ENCODE measurements at regions of chr2 and their contacts with region 1.

Region 1: GRCh38 chr2:233251306-233252116 is at the start of gene ATG16L1:
- DNase-seq: peak; percentile 95
- H3K4me3 Mint-ChIP-seq: peak within 1 kb of the TSS; percentile 93
- H3K27ac Mint-ChIP-seq: peak within 1 kb of the TSS; percentile 94
- H3K4me1 Mint-ChIP-seq: peaks cover 68% of the 10 kb centered on the region
- H3K27me3 Mint-ChIP-seq: no peaks in the 10 kb centered on the region
- total RNA-seq, gene ATG16L1: 42.4 and 42.7 TPM in 2 replicates

Region 2: GRCh38 chr2:232550354-232551249 is 700.9 kb before region 1 on chr2 and contains the starts of genes EIF4E2 and TIGD1:
- intact Hi-C with region 1: loop called (anchors 1 kb)
- DNase-seq: peak; percentile 90
- H3K4me3 Mint-ChIP-seq: peak within 1 kb of the TSS; percentile 100
- H3K27ac Mint-ChIP-seq: peak within 1 kb of the TSS; percentile 100
- H3K4me1 Mint-ChIP-seq: peaks cover 76% of the 10 kb centered on the region
- H3K27me3 Mint-ChIP-seq: no peaks in the 10 kb centered on the region
- total RNA-seq, gene EIF4E2: 94.3 and 96.2 TPM in 2 replicates
- total RNA-seq, gene TIGD1: 8.4 and 8.9 TPM in 2 replicates

Region 3: GRCh38 chr2:232761301-232761907 is 490.1 kb before region 1 on chr2:
- intact Hi-C with region 1: loop called (anchors 1 kb)
- DNase-seq: peak; percentile 12
- H3K4me3 Mint-ChIP-seq: no peak overlapping the region
- H3K27ac Mint-ChIP-seq: no peak overlapping the region
- H3K4me1 Mint-ChIP-seq: peaks cover 31% of the 10 kb centered on the region
- H3K27me3 Mint-ChIP-seq: no peaks in the 10 kb centered on the region

Region 4: GRCh38 chr2:233061591-233062450 is 189.7 kb before region 1 on chr2:
- intact Hi-C with region 1: loop called (anchors 1 kb)
- DNase-seq: no peak
- H3K4me3 Mint-ChIP-seq: peak overlapping the region; percentile 97
- H3K27ac Mint-ChIP-seq: peak overlapping the region; percentile 99
- H3K4me1 Mint-ChIP-seq: peaks cover 51% of the 10 kb centered on the region
- H3K27me3 Mint-ChIP-seq: no peaks in the 10 kb centered on the region

Region 5: DNA sequence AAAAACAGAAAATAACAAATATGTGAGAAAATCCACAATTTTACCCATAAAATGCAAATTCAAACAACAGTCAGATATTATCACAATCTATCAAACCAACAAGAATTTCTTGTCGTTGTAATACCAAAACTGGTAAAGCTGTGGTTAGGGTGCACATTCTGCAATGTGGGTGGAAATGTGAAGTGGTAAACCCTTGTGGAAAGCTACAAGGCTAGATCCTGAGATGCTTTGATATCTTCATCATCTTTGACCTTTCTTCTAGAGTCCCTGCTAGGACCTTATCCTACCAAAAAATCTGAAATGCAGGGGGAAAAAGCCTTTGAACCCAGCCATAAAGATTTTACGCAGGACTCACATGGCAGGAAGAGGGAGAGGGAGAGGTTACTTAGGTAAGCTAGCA is 17.2 kb before region 1 on chr2:
- intact Hi-C with region 1: loop called (anchors 1 kb)
- DNase-seq: peak; percentile 8
- H3K4me3 Mint-ChIP-seq: peak overlapping the region; percentile 43
- H3K27ac Mint-ChIP-seq: peak overlapping the region; percentile 86
- H3K4me1 Mint-ChIP-seq: peaks cover 62% of the 10 kb centered on the region
- H3K27me3 Mint-ChIP-seq: no peaks in the 10 kb centered on the region

Region 6: DNA sequence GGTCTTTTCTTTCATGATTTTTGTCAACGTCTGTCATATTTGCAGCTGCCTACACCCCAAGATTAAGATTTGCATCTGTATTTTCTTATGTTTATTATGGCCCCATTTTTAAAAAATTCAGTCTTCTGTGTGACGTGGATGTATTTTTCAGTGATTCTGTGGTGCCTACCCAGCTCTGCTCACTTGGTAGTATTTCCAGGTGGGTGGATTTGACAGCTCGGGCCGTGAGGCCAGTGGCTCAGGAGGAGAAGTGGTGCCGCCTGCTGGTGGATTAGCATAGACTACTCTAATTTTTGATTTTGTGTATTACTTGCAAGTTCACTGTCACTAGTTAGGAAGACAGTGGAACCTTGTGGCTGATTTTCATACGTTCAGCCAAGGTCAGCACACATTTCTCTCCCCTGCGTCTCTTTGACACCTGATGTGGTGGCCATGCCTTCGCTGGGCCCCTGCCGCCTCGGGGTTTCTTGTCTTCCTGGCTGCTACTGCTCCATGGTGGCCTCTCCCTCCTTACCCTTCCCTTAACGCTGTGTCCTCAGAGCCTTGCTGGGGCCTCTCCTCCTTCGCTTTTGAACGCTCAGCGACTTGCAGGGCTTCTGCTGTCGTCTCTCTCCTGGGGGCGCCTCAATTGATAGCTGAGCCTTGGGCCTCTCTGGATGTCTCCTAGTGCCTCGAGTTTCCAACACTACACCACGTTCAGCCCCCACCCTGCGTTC is 192.1 kb after region 1 on chr2:
- intact Hi-C with region 1: loop called (anchors 5 kb)
- DNase-seq: peak; percentile 67
- H3K4me3 Mint-ChIP-seq: no peak overlapping the region
- H3K27ac Mint-ChIP-seq: peak overlapping the region; percentile 56
- H3K4me1 Mint-ChIP-seq: peaks cover 21% of the 10 kb centered on the region
- H3K27me3 Mint-ChIP-seq: no peaks in the 10 kb centered on the region

Measured in activated T-helper 1 cell treated with anti-CD3 and anti-CD28 coated beads, Interleukin-12 subunit alpha, Interleukin-12 subunit beta, Interleukin-2, Interleukin-4 antibody, amounts not matched to agents 30 ng/mL and 10 ng/mL and 1 ng/mL, durations not matched to agents 14 hours and 24 hours and 36 hours (primary cell).